Activated CD8-positive, alpha-beta T cell treated with anti-CD3 and anti-CD28 coated beads, Interleukin-2, amount 10 ng/mL, durations not matched to agents 7 days and 5 days (primary cell): ENCODE measurements at regions of chr22 and their contacts with region 1.

Region 1: DNA sequence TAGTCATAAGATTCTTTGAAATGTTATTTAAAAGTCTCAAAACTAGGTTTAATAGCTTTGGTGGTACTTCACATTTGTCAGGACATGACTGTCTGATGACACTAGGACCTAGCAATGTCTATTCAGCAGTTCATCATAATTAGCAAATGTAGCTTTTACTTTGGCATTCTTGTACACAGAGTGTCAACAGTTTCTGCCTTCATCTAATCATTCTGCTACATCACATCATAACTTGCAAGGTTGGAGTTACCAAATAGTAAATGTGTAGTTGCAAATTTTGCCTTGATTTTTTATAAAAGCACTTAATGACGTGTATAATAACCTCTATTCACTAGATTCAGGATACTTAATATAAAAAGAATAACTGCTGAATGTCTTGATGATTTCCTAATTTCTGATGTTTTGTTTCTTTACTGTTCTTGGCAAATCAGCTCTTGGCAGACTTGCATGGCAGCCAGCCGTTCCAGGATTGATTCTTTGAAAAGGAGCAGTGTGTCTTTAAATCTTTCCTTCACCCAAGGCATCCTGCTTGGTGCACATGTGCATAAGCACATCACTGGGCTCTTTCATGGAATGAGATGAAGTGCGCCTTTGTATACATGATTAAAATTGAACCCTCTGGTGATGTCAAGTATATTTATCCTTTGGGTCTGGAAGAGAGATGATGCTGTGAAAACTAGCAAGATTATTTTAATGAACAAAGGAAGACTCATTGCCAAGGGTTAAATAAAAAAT is 12.2 kb downstream of the FBXO7 start:
- DNase-seq: no peak
- ATAC-seq: no peak
- H3K4me3 Mint-ChIP-seq: no peak overlapping the region
- H3K27ac Mint-ChIP-seq: no peak overlapping the region
- H3K4me1 Mint-ChIP-seq: peaks cover 5% of the 10 kb centered on the region
- H3K27me3 Mint-ChIP-seq: no peaks in the 10 kb centered on the region

Region 2: DNA sequence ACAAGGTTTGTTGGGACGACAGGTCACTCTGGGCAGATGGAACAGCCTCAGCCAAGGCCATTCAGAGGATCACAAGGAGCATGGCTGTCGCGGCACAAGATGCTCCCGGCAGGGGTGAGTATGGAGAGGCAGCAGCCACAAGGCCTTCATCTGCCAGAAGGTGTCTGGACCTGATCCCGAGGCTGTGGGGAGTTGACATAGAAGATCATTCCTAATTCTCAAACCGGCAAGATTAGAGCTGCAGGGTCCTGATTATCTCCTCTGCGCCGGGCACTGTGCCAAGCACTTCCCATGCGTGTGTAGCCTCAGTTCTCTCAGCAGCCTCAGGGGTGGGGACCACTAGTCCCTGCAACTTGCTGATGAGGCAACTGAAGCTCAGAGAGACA is 161.4 kb before region 1 on chr22:
- CTCF ChIA-PET with region 1: no interaction called
- POLR2A ChIA-PET with region 1: no interaction called
- DNase-seq: no peak
- ATAC-seq: no peak
- H3K4me3 Mint-ChIP-seq: no peak overlapping the region
- H3K27ac Mint-ChIP-seq: no peak overlapping the region
- H3K4me1 Mint-ChIP-seq: no peaks in the 10 kb centered on the region
- H3K27me3 Mint-ChIP-seq: no peaks in the 10 kb centered on the region

Region 3: DNA sequence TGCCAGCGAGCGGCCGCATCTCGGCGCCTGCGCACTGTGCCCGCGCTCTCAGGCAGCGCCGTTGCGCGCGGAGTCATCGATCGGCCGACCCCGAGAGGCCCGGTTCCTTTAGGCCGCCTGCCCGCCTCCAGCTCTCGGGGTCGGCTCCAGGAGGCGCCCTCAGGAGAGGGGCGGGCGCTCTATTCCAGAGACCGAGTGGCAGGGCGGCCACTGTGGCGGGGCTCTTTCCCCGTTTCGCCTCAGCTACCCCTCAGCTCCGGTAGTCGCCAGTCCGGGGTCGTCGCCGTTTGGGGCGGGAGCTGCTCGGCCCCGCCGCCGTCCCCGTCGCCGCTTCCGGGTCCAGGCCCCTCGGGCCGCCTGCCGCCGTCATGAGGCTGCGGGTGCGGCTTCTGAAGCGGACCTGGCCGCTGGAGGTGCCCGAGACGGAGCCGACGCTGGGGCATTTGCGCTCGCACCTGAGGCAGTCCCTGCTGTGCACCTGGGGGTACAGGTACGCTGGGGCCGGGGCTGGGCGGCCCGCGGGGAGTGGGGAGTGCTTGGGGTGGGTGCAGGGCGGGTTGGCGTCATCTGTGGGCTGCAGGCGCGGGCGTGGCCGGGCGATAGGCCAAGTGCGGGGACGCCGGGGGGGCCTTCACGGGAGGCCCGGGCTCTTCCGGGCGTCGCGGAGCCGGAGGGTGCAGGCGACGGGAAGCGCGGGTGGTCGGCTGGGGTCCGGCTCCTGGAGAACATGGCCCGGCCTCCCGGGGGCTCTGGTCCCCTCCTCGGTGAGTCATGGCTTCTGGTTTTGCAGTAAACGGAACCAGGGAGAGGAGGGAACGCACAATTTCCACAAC is 12.0 kb before region 1 on chr22 and contains the start of gene FBXO7:
- CTCF ChIA-PET with region 1: interaction called, 18 read pairs
- POLR2A ChIA-PET with region 1: interaction called, 7 read pairs
- DNase-seq: peak; percentile 90
- ATAC-seq: peak; percentile 88
- H3K4me3 Mint-ChIP-seq: peak within 1 kb of the TSS; percentile 95
- H3K27ac Mint-ChIP-seq: peak within 1 kb of the TSS; percentile 95
- H3K4me1 Mint-ChIP-seq: peaks cover 22% of the 10 kb centered on the region
- H3K27me3 Mint-ChIP-seq: no peaks in the 10 kb centered on the region
- total RNA-seq, gene FBXO7: 84.0 to 90.0 TPM